WTC11 (cell line): ENCODE measurements at regions of chr5 and their contacts with region 1.

Region 1: GRCh38 chr5:1644810-1645571 is 121.2 kb upstream of the LPCAT1 start:
- DNase-seq: peak; percentile 88
- ATAC-seq: peak; percentile 85
- H3K4me3 Mint-ChIP-seq: peak overlapping the region; percentile 65
- H3K27ac Mint-ChIP-seq: no peak overlapping the region
- H3K4me1 Mint-ChIP-seq: peaks cover 25% of the 10 kb centered on the region
- H3K27me3 Mint-ChIP-seq: peaks cover 67% of the 10 kb centered on the region
- CTCF ChIP-seq: peak; percentile 81; the same call in 1 of the 2 replicates

Region 2: DNA sequence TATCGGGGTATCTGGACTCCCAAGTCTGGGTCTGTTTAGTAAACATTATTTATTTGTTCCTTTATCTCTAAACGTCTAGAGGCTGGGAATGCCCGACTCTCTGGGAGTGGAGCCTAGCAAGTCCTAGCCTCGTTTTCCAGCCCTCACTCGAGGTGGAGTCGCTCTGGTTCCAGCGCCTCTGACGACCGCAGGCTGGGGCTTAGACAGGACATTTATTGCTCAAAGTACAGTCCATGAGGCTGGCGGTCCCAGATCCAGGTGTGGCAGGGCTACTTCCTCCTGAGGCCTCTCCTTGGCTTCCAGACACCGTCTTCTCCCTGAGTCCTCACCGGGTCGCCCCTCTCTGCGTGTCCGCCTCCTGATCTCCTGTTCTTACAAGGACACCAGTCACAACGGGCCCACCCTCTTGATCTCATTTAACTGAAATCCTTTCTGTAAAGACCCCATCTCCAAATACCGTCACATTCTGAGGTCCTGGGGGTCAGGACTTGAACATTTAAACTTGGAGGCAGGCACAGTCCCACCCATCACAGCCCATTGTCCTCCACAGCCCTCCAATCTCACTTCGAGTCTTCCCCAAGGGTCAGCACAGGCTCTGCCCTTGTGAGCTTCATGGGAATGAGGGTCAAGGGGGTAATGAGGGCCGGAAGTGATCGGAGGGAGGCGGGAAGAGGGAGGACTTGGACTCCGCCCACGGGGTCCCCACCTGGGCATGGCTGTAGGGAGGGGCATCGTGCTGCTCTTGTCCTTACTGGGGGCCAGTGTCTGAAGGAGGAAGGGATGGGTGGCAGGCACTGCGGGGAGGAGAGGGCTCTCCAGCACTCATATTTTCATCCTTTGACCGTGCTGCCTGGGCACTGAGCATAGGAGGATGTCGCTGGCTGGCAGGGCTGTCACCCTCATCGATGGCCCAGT is 287.9 kb before region 1 on chr5:
- CTCF ChIA-PET with region 1: interaction called, 10 read pairs
- POLR2A ChIA-PET with region 1: no interaction called
- DNase-seq: no peak
- ATAC-seq: peak; percentile 64
- H3K4me3 Mint-ChIP-seq: no peak overlapping the region
- H3K27ac Mint-ChIP-seq: no peak overlapping the region
- H3K4me1 Mint-ChIP-seq: peaks cover 15% of the 10 kb centered on the region
- H3K27me3 Mint-ChIP-seq: no peaks in the 10 kb centered on the region
- CTCF ChIP-seq: no peak

Region 3: GRCh38 chr5:1409381-1410110 is 235.4 kb before region 1 on chr5:
- CTCF ChIA-PET with region 1: interaction called, 16 read pairs
- POLR2A ChIA-PET with region 1: no interaction called
- DNase-seq: peak; percentile 74
- ATAC-seq: peak; percentile 60
- H3K4me3 Mint-ChIP-seq: no peak overlapping the region
- H3K27ac Mint-ChIP-seq: no peak overlapping the region; the same call in 1 of the 2 replicates
- H3K4me1 Mint-ChIP-seq: peaks cover 10% of the 10 kb centered on the region
- H3K27me3 Mint-ChIP-seq: no peaks in the 10 kb centered on the region
- CTCF ChIP-seq: no peak

Region 4: GRCh38 chr5:1479581-1480188 is 165.3 kb before region 1 on chr5:
- CTCF ChIA-PET with region 1: interaction called, 24 read pairs
- POLR2A ChIA-PET with region 1: no interaction called
- DNase-seq: peak; percentile 65
- ATAC-seq: peak; percentile 61
- H3K4me3 Mint-ChIP-seq: no peak overlapping the region
- H3K27ac Mint-ChIP-seq: peak overlapping the region; percentile 93; the same call in 1 of the 2 replicates
- H3K4me1 Mint-ChIP-seq: peaks cover 5% of the 10 kb centered on the region
- H3K27me3 Mint-ChIP-seq: no peaks in the 10 kb centered on the region
- CTCF ChIP-seq: peak; percentile 72

Region 5: DNA sequence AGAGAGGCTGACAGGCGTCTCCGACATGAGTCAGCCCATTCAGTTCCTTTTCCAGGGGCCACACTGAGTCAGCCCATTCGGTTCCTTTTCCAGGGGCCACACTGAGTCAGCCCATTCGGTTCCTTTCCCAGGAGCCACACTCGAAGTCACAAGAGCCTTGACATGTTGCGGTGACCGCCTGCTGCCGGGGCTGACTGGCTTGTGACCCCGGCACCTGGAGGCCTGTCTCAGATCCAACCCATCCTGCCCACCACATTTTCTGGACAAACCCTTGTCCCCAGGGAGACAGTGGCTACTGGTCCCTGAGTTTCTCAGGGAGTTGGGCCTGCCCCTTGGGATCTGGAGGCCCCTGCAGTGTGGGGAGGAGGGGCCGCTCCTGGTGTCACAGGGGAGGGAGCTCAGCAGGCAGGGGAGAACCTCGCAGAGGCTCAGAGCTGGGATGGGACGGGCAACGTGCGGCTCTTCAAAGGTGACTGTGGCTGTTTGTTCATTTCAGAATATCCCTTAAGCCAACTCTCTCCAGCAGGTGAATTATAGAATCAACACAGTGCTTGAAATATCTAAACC is 80.7 kb before region 1 on chr5:
- CTCF ChIA-PET with region 1: interaction called, 11 read pairs
- POLR2A ChIA-PET with region 1: no interaction called
- DNase-seq: no peak
- ATAC-seq: no peak; the same call in 1 of the 2 replicates
- H3K4me3 Mint-ChIP-seq: no peak overlapping the region
- H3K27ac Mint-ChIP-seq: no peak overlapping the region
- H3K4me1 Mint-ChIP-seq: no peaks in the 10 kb centered on the region
- H3K27me3 Mint-ChIP-seq: no peaks in the 10 kb centered on the region
- CTCF ChIP-seq: no peak

Region 6: GRCh38 chr5:1633605-1634336 is 11.2 kb before region 1 on chr5:
- CTCF ChIA-PET with region 1: interaction called, 10 read pairs
- POLR2A ChIA-PET with region 1: interaction called, 3 read pairs
- DNase-seq: peak; percentile 76
- ATAC-seq: peak; percentile 88
- H3K4me3 Mint-ChIP-seq: peak overlapping the region; percentile 85
- H3K27ac Mint-ChIP-seq: peak overlapping the region; percentile 91; the same call in 1 of the 2 replicates
- H3K4me1 Mint-ChIP-seq: peaks cover 18% of the 10 kb centered on the region
- H3K27me3 Mint-ChIP-seq: no peaks in the 10 kb centered on the region
- CTCF ChIP-seq: no peak